ENCODE measurements at regions of chr1 and their contacts with region 1.

Region 1: GRCh38 chr1:24391882-24392603 is 21.5 kb downstream of the STPG1 start:
- DNase-seq: peak; percentile 67 to 75
- ATAC-seq: peak; percentile 85

Region 2: GRCh38 chr1:22507587-22507986 is 1884.5 kb before region 1 on chr1:
- intact Hi-C with region 1: no loop called
- DNase-seq: no peak
- ATAC-seq: no peak

Region 3: GRCh38 chr1:24199289-24199900 is 192.6 kb before region 1 on chr1:
- intact Hi-C with region 1: loop called in 1 of 2 experiments (anchors 2 kb)
- DNase-seq: peak in 1 of 2 donors; percentile 55
- ATAC-seq: no peak

Region 4: DNA sequence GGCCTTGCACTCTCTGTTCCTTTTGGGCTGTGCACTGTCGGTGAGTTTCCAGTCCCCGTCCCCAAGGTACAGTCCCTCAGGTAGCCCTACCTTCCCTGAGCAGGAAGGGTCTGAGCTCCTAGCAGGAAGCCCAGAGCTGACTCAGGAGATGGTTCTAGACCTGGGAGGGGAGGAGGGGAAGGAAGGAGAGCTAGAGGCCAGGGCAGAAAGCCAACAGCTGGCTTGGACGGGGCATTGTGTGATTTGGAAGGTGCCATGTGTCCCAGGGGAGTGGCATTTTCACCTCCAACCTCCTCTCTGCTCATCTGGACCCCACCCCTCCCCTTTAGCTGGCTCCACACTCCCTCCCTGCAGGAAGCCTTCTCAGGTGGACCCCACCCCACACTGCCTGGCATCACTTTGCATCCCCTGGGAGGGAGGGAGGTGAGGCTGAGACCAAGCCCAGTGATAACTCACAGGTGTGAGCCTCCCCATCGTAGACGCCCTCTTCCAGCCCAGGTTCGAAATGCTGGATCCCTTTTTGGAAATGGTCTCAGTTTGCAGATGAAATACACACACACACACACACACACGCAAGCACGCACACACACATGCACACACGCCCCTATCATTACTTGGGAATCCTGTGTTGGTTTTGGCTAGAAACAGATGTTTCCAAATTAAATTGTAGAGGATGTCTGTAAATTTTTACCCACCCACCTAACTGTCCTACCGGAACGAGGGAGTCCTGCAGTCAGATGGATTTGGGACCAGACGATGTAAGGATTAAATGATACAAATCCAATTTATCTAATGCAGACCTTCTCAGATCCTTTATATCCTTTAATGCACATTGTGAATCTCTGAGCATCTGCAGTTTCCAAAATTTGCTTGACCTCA is 185.3 kb before region 1 on chr1:
- intact Hi-C with region 1: loop called in 1 of 2 experiments (anchors 5 kb)
- DNase-seq: peak in 1 of 2 donors; percentile 50
- ATAC-seq: peak; percentile 25

Region 5: GRCh38 chr1:24289937-24290595 is 102.0 kb before region 1 on chr1:
- intact Hi-C with region 1: no loop called
- DNase-seq: peak; percentile 82 to 83
- ATAC-seq: peak; percentile 94

Measured in left colon (tissue), 2 donors.